ENCODE measurements at regions of chr1 and their contacts with region 1.

Region 1: GRCh38 chr1:183287191-183287675 is 101.2 kb downstream of the LAMC2 start:
- DNase-seq: no peak
- ATAC-seq: no peak
- H3K4me3 ChIP-seq: no peak overlapping the region
- H3K27ac ChIP-seq: no peak overlapping the region
- H3K4me1 ChIP-seq: no peaks in the 10 kb centered on the region
- H3K27me3 ChIP-seq: no peaks in the 10 kb centered on the region
- CTCF ChIP-seq: no peak

Region 2: DNA sequence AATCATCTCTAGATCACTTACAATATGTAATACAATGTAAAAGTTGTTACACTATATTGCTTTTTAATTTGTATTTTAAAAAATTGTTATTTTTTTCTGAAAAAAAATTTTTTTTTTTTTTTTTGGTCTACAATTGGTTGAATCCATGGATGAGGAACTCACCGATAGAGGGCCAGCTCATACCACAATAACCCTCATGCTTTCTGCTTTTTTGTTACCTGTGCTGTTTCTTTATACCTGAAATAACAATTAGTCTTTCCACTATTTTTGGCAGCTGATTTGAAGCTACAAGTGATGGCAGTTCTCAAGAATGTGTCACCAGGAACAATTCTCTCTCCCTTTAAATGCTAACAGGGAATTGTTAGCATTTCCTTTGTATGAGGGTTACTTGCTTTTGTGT is 197.0 kb after region 1 on chr1:
- CTCF ChIA-PET with region 1: no interaction called
- POLR2A ChIA-PET with region 1: interaction called, 19 read pairs
- in situ Hi-C with region 1: no loop called
- intact Hi-C with region 1: no loop called
- DNase-seq: no peak
- ATAC-seq: no peak
- H3K4me3 ChIP-seq: no peak overlapping the region
- H3K27ac ChIP-seq: no peak overlapping the region
- H3K4me1 ChIP-seq: no peaks in the 10 kb centered on the region
- H3K27me3 ChIP-seq: no peaks in the 10 kb centered on the region
- CTCF ChIP-seq: no peak